AG04449 (cell line): ENCODE measurements at regions of chr11 and their contacts with region 1.

Region 1: DNA sequence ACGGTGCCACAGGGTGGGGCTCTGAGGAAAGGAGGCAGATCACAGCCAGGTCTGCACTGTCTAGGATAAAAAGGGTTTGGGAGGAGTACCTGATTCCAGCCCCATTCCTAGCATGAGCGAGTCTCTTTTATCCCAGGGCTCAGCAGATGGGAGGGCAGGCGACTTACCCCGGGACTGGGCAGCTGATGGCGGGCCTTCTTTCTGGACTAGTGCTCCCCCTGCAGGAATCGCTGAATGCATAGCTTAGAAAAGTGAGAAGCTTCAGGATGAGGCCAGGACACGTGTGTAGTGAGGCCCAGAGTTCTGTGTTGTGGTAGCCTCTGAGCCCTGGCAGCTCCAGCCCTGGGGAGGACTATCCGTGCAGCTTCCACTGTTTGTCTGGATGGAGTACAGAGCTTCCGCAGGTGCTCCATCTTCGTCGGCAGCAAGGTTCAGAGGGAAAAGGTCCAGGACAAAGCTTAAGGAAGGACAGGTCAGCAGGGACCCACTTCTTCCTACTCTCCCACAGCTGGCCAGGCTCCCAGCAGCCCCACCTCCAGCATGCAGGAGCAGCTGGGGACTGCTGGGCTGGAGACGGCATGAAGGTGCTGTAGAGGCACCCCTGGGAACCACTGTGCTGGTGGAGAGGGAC is 30.4 kb downstream of the COMMD9 start:
- DNase-seq: peak; percentile 36
- H3K4me3 ChIP-seq: no peak overlapping the region
- CTCF ChIP-seq: peak; percentile 76

Region 2: DNA sequence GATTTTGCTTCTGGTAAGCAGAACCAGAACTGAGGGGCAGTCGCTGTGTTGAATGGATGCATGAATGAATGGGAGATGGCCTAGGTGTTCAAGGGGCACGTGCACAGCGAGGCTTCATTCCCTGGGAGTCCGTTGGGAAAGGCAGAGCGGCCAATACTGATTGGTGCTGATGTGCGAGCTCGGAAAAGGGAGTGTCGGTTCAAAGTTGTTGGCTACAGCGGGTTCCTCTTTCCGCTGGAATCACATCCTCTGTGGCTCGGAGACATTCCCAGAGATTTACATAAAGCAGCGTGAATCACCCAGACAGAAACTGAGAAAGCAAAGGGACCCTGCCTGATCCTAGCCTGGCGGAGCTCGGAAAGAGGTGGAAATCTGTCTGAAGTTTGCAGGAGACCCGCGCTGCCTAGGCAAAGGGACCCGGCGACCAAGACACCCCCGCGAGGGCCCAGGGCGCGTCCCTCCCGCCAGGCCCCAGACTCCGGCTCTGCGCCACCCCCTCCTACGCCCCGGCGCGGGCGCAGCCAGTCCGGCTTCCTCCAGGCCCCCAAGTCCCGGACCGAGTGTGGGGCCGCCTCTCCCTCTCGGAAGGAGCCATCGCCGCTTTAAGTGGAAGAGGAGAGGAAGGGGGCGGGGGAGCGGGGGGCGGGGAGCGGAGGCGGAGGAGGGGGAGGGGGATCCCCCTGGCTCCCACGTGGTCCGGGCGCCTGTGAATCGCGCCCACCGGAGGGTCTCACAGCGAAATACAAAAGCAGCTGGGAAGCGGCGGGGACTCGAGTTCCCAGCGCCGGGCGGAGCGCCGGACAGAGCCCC is 641.0 kb before region 1 on chr11 and contains the start of gene FJX1:
- CTCF ChIA-PET with region 1: interaction called, 19 read pairs
- POLR2A ChIA-PET with region 1: interaction called, 4 read pairs
- DNase-seq: no peak
- H3K4me3 ChIP-seq: peak within 1 kb of the TSS; percentile 69
- CTCF ChIP-seq: no peak

Region 3: DNA sequence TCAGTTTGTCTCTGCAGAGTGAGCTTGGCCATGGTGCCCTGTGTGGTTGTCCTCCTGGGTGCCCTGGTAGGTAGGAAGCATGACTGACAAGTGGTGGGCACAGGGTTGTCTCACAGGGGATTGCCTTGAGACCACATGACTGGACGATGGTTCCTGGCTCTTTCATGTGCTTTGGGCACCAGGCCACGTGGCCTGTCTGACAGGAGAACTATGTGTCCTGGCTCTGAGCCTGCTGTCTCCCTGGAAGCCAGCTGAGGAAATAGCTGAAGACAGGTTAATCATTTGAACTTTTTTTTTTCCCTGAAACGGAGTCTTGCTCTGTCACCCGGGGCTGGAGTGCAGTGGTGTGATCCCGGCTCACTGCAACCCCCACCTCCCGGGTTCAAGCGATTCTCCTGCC is 221.8 kb before region 1 on chr11:
- CTCF ChIA-PET with region 1: interaction called, 77 read pairs
- POLR2A ChIA-PET with region 1: no interaction called
- DNase-seq: no peak
- H3K4me3 ChIP-seq: no peak overlapping the region
- CTCF ChIP-seq: no peak

Region 4: DNA sequence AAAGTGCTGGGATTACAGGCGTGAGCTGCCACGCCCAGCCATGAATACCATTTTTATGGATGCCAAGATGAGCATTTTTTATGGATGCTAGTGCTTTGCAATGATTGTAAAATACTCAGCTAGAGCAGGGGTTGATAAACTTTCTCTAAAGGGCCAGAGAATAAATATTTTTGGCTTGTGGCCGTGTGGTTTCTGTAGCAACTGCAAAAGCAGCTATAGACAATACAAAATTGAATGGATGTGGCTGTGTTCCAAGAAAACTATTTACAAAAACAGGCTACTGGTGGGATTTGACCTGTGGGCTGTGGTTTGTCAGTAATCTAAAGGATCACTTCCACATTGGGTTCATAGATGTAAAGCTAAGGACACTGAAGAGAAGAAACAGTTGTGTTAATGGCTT is 25.6 kb before region 1 on chr11:
- CTCF ChIA-PET with region 1: interaction called, 10 read pairs
- POLR2A ChIA-PET with region 1: interaction called, 3 read pairs
- DNase-seq: no peak
- H3K4me3 ChIP-seq: no peak overlapping the region
- CTCF ChIP-seq: no peak

Region 5: GRCh38 chr11:36271794-36272407 is 13.1 kb after region 1 on chr11:
- CTCF ChIA-PET with region 1: interaction called, 55 read pairs
- POLR2A ChIA-PET with region 1: no interaction called
- DNase-seq: no peak
- H3K4me3 ChIP-seq: no peak overlapping the region
- CTCF ChIP-seq: no peak

Region 6: GRCh38 chr11:36333897-36334296 is 75.1 kb after region 1 on chr11:
- CTCF ChIA-PET with region 1: no interaction called
- POLR2A ChIA-PET with region 1: no interaction called
- DNase-seq: no peak
- H3K4me3 ChIP-seq: no peak overlapping the region
- CTCF ChIP-seq: no peak

Region 7: GRCh38 chr11:36385121-36385970 is 126.5 kb after region 1 on chr11:
- CTCF ChIA-PET with region 1: no interaction called
- POLR2A ChIA-PET with region 1: no interaction called
- DNase-seq: peak; percentile 37
- H3K4me3 ChIP-seq: no peak overlapping the region
- CTCF ChIP-seq: no peak